PC-9 (cell line): ENCODE measurements at regions of chr5 and their contacts with region 1.

Region 1: GRCh38 chr5:140084541-140084940 is 29.4 kb upstream of the PURA start:
- DNase-seq: no peak
- H3K4me3 ChIP-seq: no peak overlapping the region
- H3K27ac ChIP-seq: no peak overlapping the region
- H3K4me1 ChIP-seq: no peaks in the 10 kb centered on the region
- H3K27me3 ChIP-seq: peaks cover 22% of the 10 kb centered on the region
- CTCF ChIP-seq: no peak

Region 2: DNA sequence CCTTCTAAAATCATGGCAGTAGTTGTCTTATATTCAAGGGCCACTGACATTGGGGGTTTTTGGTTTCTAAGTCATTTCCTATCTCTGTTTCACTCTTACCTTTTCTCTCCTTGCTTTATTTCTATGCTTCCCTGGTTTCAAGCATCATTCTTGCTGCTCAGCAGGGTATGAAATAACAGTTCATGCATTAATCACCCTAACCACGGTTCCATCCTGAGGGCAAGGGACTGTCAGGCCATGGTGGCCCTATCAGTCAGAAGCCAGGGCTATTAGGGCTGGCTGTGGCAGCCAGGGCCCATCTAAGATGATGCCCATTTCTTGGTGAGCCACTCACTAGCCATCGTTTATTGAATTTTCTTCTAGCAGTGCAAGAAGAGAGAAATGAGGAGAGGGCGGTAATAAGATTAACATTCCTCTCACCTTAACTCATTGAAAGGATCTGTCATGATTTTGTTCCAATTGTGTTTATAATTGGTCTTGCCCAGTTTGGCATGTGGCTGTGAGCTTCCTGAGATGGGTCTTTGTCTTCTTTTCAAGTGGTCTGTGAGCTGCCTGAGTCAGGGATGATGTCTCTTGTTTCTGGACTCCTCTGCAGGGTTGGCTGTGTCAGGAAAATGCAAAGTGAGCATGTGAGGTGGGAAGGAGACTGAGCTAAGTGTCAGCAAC is 135.6 kb after region 1 on chr5:
- CTCF ChIA-PET with region 1: no interaction called
- POLR2A ChIA-PET with region 1: no interaction called
- intact Hi-C with region 1: loop called (anchors 10 kb)
- DNase-seq: peak in 1 of 2 experiments; percentile 46
- H3K4me3 ChIP-seq: no peak overlapping the region
- H3K27ac ChIP-seq: no peak overlapping the region
- H3K4me1 ChIP-seq: peaks cover 39% of the 10 kb centered on the region
- H3K27me3 ChIP-seq: no peaks in the 10 kb centered on the region
- CTCF ChIP-seq: no peak